CD14-positive monocyte (primary cell): ENCODE measurements at regions of chr22 and their contacts with region 1.

Region 1: GRCh38 chr22:19178656-19179496 is at the start of gene SLC25A1:
- DNase-seq: peak; percentile 68 to 78 (median 78)
- H3K4me3 ChIP-seq: peak within 1 kb of the TSS; percentile 49 to 83 (median 75)
- H3K4me3 Mint-ChIP-seq: peak within 1 kb of the TSS; percentile 74 to 77
- H3K27ac ChIP-seq: peak within 1 kb of the TSS in 1 of 2 donors; percentile 36
- H3K27ac Mint-ChIP-seq: peak within 1 kb of the TSS in 2 of 7 donors; percentile 63 to 75
- H3K4me1 ChIP-seq: peaks cover 28 to 39% of the 10 kb centered on the region in 2 donors
- H3K4me1 Mint-ChIP-seq: peaks cover 21% of the 10 kb centered on the region
- H3K27me3 ChIP-seq: no peaks in the 10 kb centered on the region
- H3K27me3 Mint-ChIP-seq: peaks cover 0 to 2% (median 2%) of the 10 kb centered on the region in 3 donors
- CTCF ChIP-seq: no peak
- polyA plus RNA-seq, gene SLC25A1: 15.2 to 37.4 (median 35.1) TPM

Region 2: DNA sequence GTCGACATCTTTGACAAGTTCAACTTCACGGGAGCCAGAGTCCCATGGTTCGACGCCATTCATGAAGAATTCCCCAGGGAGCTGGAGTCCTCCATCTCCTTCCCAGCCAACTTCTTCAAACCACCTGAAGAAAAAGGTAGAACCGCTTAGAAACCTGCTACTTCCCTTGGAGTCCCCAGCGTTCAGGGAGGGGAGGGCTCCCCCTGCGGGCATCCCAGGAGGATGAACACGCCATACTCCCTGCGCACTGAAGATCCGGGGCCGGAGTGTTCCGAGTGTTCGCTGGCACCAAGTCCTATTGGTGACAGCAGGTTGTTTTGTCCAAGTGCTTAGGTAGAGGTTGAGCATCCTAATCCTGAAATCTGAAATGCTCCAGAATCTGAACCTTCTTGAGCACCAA is 191.1 kb before region 1 on chr22:
- intact Hi-C with region 1: no loop called
- DNase-seq: no peak
- H3K4me3 ChIP-seq: no peak overlapping the region
- H3K4me3 Mint-ChIP-seq: no peak overlapping the region
- H3K27ac ChIP-seq: no peak overlapping the region
- H3K27ac Mint-ChIP-seq: no peak overlapping the region
- H3K4me1 ChIP-seq: no peaks in the 10 kb centered on the region
- H3K4me1 Mint-ChIP-seq: no peaks in the 10 kb centered on the region
- H3K27me3 ChIP-seq: no peaks in the 10 kb centered on the region
- H3K27me3 Mint-ChIP-seq: peaks cover 0 to 4% (median 4%) of the 10 kb centered on the region in 3 donors
- CTCF ChIP-seq: no peak

Region 3: DNA sequence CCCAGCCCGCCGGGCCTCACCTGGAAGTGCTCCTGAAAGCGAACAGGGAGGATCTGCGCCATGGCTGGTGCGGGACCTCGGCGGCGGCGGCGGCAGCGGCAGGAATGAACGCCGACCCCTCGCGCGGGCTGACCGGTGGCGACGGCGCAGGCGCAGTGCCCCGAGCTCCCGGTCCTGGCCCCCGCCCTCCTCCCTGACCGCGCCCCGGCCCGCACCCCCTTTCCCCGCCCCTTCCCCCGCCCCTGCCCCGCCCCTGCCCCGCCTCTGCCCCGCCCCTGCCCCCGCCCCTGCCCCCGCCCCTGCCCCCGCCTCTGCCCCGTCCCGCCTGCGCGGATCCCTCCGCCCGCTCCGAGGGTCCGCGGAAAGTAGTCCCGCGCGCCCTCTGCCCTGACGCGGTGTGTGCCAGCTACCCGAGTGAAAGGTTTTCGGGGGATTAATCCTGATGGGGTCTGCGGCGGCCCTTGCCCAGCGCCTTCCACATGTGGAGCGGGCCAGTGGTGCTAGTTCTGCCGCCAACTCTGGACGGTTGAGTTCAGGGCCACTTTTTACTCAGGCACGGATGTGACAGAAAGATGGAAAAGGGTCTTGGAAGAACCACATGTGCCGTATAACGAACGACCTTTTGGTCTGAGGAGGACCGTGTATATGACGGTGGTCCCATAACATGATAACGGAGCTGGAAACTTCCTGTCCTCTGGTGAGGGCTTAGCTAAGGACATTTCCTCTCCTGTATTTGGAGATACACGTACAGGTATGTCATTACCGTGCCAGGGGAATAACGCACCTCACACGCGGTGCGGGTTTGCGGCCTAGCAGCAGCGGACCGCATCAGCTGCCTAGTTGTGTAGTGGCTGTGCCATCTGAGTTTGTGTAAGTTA is 112.9 kb after region 1 on chr22 and contains the start of gene CLTCL1:
- intact Hi-C with region 1: loop called (anchors 2 to 5 kb)
- DNase-seq: peak; percentile 49 to 71 (median 71)
- H3K4me3 ChIP-seq: peak within 1 kb of the TSS; percentile 82 to 96 (median 96)
- H3K4me3 Mint-ChIP-seq: peak within 1 kb of the TSS; percentile 86 to 96
- H3K27ac ChIP-seq: peak within 1 kb of the TSS in 1 of 2 donors; percentile 64
- H3K27ac Mint-ChIP-seq: peak within 1 kb of the TSS in 6 of 7 donors; percentile 7 to 86 (median 74)
- H3K4me1 ChIP-seq: peaks cover 18 to 22% of the 10 kb centered on the region in 2 donors
- H3K4me1 Mint-ChIP-seq: peaks cover 28% of the 10 kb centered on the region
- H3K27me3 ChIP-seq: peaks cover 18 to 22% of the 10 kb centered on the region in 2 donors
- H3K27me3 Mint-ChIP-seq: peaks cover 19 to 36% (median 21%) of the 10 kb centered on the region in 3 donors
- CTCF ChIP-seq: no peak
- polyA plus RNA-seq, gene CLTCL1: 5.1 to 17.0 (median 6.1) TPM